Dorsolateral prefrontal cortex (tissue), 120 donors: ENCODE measurements at regions of chr1 and their contacts with region 1.

Region 1: GRCh38 chr1:115717541-115717940 is 51.0 kb downstream of the CASQ2 start:
- DNase-seq: peak in 8 of 10 donors; percentile 14 to 60 (median 49)
- H3K4me3 ChIP-seq: no peak overlapping the region
- H3K27ac ChIP-seq: no peak overlapping the region
- H3K27me3 ChIP-seq: peaks cover 0 to 10% (median 0%) of the 10 kb centered on the region in 45 donors
- CTCF ChIP-seq: peak in 55 of 56 donors; percentile 29 to 73 (median 55)

Region 2: GRCh38 chr1:115771847-115772457 is 54.4 kb after region 1 on chr1:
- intact Hi-C with region 1: loop called in 1 of 2 experiments (anchors 5 kb)
- DNase-seq: peak in 5 of 10 donors; percentile 10 to 67 (median 49)
- H3K4me3 ChIP-seq: peak overlapping the region in 35 of 59 donors; percentile 4 to 51 (median 32)
- H3K27ac ChIP-seq: no peak overlapping the region
- H3K27me3 ChIP-seq: peaks cover 0 to 6% (median 0%) of the 10 kb centered on the region in 45 donors
- CTCF ChIP-seq: peak; percentile 54 to 89 (median 78)

Region 3: GRCh38 chr1:115980998-115981993 is 263.8 kb after region 1 on chr1:
- intact Hi-C with region 1: loop called in 1 of 2 experiments (anchors 5 kb)
- DNase-seq: peak in 3 of 10 donors; percentile 3 to 43 (median 36)
- H3K4me3 ChIP-seq: peak overlapping the region in 2 of 59 donors; percentile 1 to 12
- H3K27ac ChIP-seq: peak overlapping the region in 55 of 59 donors; percentile 11 to 99 (median 97)
- H3K27me3 ChIP-seq: no peaks in the 10 kb centered on the region
- CTCF ChIP-seq: peak in 55 of 56 donors; percentile 43 to 77 (median 64)